ENCODE measurements at regions of chr2 and their contacts with region 1.

Region 1: DNA sequence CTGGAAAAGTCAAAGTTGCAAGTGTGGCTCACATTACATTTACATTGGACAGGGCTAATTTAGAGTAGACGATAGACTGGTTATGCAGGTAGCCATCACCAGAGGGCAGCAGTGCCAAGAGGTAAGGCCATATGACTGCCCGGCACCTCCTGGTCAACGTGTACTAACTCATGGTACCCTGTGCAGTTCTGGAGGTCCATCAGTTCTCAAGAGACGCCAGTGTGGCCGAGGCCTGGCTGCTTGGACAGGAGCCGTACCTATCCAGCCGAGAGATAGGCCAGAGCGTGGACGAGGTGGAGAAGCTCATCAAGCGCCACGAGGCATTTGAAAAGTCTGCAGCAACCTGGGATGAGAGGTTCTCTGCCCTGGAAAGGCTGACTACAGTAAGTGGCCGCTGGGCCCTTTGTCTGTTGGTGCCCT is 65.8 kb upstream of the EML6 start:
- DNase-seq: peak; percentile 43 to 59
- ATAC-seq: peak; percentile 71 to 85
- H3K4me3 ChIP-seq: no peak overlapping the region
- H3K27ac ChIP-seq: peak overlapping the region; percentile 23 to 56 (median 38)
- H3K4me1 ChIP-seq: peaks cover 4 to 8% of the 10 kb centered on the region in 2 donors
- H3K27me3 ChIP-seq: no peaks in the 10 kb centered on the region
- CTCF ChIP-seq: peak; percentile 37 to 69 (median 55)
- POLR2A ChIP-seq: no peak

Region 2: DNA sequence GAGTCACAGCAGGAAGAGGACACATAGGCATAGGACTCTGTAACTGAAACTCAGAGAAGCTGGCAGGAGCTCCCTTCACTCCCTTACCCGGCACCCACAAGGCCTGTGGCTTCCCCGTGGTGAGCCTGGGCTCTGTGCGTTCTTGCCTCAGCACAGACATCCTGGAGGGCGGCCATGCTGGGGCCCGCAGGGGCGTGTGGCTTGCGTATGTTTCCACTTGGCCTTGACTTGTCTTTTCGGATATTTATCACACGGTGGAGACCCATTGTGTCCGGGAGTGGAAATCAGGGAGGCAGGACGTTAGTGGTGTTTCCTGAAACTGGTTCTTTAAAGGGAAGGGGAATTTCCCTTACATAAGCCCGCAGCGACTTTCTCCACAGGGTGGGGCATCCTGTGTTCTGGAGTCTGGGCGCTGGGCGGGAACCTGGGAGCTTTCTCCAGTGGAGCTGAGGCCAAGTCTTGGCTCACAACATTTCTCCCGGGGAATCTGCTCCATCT is 15.9 kb after region 1 on chr2:
- in situ Hi-C with region 1: no loop called
- intact Hi-C with region 1: no loop called
- DNase-seq: peak; percentile 68 to 75
- ATAC-seq: peak; percentile 73 to 78
- H3K4me3 ChIP-seq: peak overlapping the region in 3 of 4 donors; percentile 10 to 39 (median 25)
- H3K27ac ChIP-seq: peak overlapping the region; percentile 79 to 86 (median 82)
- H3K4me1 ChIP-seq: peaks cover 18 to 34% of the 10 kb centered on the region in 2 donors
- H3K27me3 ChIP-seq: no peaks in the 10 kb centered on the region
- CTCF ChIP-seq: no peak
- POLR2A ChIP-seq: peak; percentile 12 to 62

Region 3: DNA sequence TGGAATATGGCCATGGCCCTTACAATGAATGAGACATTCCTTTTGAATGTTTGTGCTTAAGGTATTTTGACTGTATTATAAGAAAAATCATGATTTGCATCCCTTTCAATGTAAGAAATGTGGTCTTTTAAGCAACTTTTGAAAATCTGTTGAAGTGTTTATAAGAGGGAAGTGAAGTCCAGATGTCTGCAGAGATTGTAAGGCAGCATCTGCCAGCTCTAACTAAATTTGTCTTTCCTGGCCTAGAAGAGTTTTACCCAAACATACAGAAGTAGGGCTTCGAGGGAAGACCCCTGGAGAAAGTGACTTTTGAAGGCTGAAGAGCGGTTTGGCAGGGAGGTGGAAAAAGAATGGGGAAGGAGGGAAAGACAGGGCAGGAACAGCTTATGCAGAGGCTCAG is 78.0 kb after region 1 on chr2:
- in situ Hi-C with region 1: no loop called
- intact Hi-C with region 1: no loop called
- DNase-seq: no peak
- ATAC-seq: no peak
- H3K4me3 ChIP-seq: no peak overlapping the region
- H3K27ac ChIP-seq: no peak overlapping the region
- H3K4me1 ChIP-seq: no peaks in the 10 kb centered on the region
- H3K27me3 ChIP-seq: no peaks in the 10 kb centered on the region
- CTCF ChIP-seq: no peak
- POLR2A ChIP-seq: no peak

Region 4: GRCh38 chr2:54838585-54839035 is 180.9 kb after region 1 on chr2:
- in situ Hi-C with region 1: loop called in 1 of 4 experiments (anchors 25 kb)
- intact Hi-C with region 1: loop called (anchors 2 kb)
- DNase-seq: peak; percentile 15 to 41
- ATAC-seq: peak; percentile 66 to 90
- H3K4me3 ChIP-seq: no peak overlapping the region
- H3K27ac ChIP-seq: no peak overlapping the region
- H3K4me1 ChIP-seq: no peaks in the 10 kb centered on the region
- H3K27me3 ChIP-seq: no peaks in the 10 kb centered on the region
- CTCF ChIP-seq: peak; percentile 64 to 90 (median 79)
- POLR2A ChIP-seq: no peak

Measured in gastrocnemius medialis (tissue), 4 donors.